IMR-90 (cell line): ENCODE measurements at regions of chr21 and their contacts with region 1.

Region 1: GRCh38 chr21:17903029-17903806 is 84.1 kb upstream of the C21orf91 start:
- DNase-seq: peak; percentile 49
- ATAC-seq: peak; percentile 54; the same call in 1 of the 2 replicates
- H3K4me3 ChIP-seq: no peak overlapping the region
- H3K27ac ChIP-seq: no peak overlapping the region
- H3K4me1 ChIP-seq: no peaks in the 10 kb centered on the region
- H3K27me3 ChIP-seq: peaks cover 6% of the 10 kb centered on the region; the same call in 1 of the 2 replicates
- CTCF ChIP-seq: peak; percentile 46
- POLR2A ChIP-seq: no peak
- RAD21 ChIP-seq: peak; percentile 47

Region 2: DNA sequence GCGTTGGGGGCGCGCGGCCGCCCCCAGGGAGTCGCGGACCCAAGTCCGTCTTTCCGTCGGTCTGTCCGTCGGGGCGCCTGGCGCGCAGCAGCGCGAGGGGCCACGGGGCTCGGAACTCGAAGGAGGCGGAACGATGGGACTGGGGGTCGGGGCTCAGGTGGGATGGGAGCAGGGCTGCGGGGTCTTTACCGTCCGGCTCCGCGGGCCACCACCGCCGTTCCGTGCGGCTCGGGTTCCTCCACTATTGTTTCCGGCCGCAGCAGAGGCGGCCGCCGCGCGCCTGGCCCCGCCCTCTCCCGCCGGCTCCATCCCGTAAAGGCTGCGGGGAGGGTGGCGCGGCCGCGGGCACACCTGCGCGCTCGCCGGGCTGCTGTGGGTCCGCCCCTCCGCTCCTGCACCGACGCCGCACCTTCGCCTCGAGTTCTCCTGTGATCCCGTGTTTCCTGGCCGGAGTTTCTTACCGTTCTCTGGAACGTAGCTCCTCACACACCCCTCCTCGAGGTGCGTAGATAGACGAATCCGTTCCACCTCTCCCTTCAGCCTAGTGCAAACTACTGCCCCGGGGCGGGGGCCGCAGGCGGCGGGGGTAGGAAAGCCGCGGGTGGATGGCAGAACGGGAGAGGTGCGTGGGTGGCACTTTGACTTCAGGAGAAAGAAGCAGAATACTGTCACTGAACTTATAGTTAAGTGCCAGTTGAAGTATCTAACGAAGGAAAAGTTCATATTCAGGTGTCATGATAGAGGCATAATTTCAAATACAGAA is 83.9 kb before region 1 on chr21 and contains the start of gene C21orf91:
- CTCF ChIA-PET with region 1: interaction called, 3 read pairs
- POLR2A ChIA-PET with region 1: no interaction called
- dilution Hi-C with region 1: no loop called
- in situ Hi-C with region 1: no loop called
- intact Hi-C with region 1: loop called (anchors 1 kb)
- DNase-seq: peak; percentile 86
- ATAC-seq: peak; percentile 95
- H3K4me3 ChIP-seq: peak within 1 kb of the TSS; percentile 79
- H3K27ac ChIP-seq: peak within 1 kb of the TSS; percentile 94
- H3K4me1 ChIP-seq: peaks cover 4% of the 10 kb centered on the region
- H3K27me3 ChIP-seq: no peaks in the 10 kb centered on the region
- CTCF ChIP-seq: no peak
- POLR2A ChIP-seq: peak; percentile 93
- RAD21 ChIP-seq: no peak
- total RNA-seq, gene C21orf91: 9.3 and 13.1 TPM in 2 replicates

Region 3: DNA sequence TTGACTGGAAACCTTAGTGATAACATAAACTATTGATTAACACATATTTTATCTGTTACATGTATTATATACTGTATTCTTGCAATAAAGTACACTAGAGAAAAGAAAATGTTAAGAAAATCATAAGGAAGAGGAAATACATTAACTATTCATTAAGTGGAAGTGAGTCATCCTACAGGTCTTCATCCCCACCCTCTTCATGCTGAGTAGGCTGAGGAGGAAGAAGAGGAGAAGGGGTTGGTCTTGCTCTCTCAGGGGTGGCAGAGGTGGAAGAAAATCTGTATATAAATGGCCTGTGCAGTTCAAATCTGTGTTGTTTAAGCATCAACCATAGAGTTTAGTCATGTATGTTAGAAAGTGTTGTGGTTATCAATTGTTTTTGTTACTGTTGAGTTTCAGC is 275.3 kb after region 1 on chr21:
- CTCF ChIA-PET with region 1: no interaction called
- POLR2A ChIA-PET with region 1: no interaction called
- dilution Hi-C with region 1: no loop called
- in situ Hi-C with region 1: no loop called
- intact Hi-C with region 1: no loop called
- DNase-seq: no peak
- ATAC-seq: no peak
- H3K4me3 ChIP-seq: no peak overlapping the region
- H3K27ac ChIP-seq: no peak overlapping the region
- H3K4me1 ChIP-seq: no peaks in the 10 kb centered on the region
- H3K27me3 ChIP-seq: no peaks in the 10 kb centered on the region
- CTCF ChIP-seq: no peak
- POLR2A ChIP-seq: no peak
- RAD21 ChIP-seq: no peak